CD8-positive, alpha-beta T cell (primary cell): ENCODE measurements at regions of chr19 and their contacts with region 1.

Region 1: DNA sequence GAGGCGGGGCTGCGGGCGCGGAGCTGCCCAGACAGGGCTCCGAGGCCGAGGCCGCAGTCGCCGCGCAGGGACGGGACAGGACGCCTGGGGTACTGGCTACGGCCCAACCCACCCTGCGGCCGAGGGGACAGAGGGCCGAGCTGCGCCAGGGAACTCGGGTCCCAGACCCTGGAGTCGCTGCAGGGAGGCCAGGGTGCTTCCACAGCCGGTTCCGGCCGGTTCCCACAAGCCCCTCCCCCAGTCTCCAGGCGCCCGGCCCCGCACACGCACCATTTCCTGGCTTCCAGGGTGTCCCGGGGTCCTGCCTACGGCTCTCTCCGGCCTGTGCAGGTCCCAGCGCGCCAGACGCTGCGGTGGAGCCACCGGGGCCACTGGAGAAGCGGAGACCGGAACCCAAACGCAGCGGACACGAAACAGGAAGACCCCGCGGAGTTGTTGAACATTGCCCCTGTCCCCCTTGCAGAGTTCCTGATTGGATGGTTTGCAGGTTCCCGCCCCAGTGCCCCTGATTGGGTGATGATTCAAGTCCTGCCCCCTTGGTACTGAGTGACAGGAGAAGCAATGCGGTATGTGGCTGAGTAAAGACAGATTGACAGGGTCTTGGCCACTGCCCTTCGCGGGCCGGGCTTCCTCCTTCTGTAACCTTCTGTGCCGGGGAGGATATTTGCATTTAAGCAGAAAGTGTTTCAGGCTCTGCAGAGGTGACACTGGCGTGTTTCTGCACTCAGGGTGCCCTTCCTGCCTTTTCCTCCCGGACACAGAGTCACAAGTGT is at the start of gene ZNF564:
- DNase-seq: peak; percentile 85 to 98 (median 92)
- ATAC-seq: peak; percentile 98
- H3K4me3 ChIP-seq: peak within 1 kb of the TSS; percentile 59 to 94
- H3K4me3 Mint-ChIP-seq: peak within 1 kb of the TSS; percentile 98
- H3K27ac ChIP-seq: peak within 1 kb of the TSS; percentile 88 to 91
- H3K27ac Mint-ChIP-seq: peak within 1 kb of the TSS; percentile 97
- H3K4me1 ChIP-seq: peaks cover 25% of the 10 kb centered on the region
- H3K4me1 Mint-ChIP-seq: peaks cover 51% of the 10 kb centered on the region
- H3K27me3 ChIP-seq: no peaks in the 10 kb centered on the region
- H3K27me3 Mint-ChIP-seq: no peaks in the 10 kb centered on the region
- CTCF ChIP-seq: no peak
- total RNA-seq, gene ZNF564: 17.8 to 18.2 TPM

Region 2: GRCh38 chr19:12162882-12163806 is 388.1 kb before region 1 on chr19 and contains the start of gene ZNF136:
- CTCF ChIA-PET with region 1: no interaction called
- POLR2A ChIA-PET with region 1: no interaction called
- intact Hi-C with region 1: loop called in 1 of 2 experiments (anchors 1 kb)
- DNase-seq: peak; percentile 84 to 97 (median 91)
- ATAC-seq: peak; percentile 99
- H3K4me3 ChIP-seq: peak within 1 kb of the TSS; percentile 83 to 86
- H3K4me3 Mint-ChIP-seq: peak within 1 kb of the TSS; percentile 96
- H3K27ac ChIP-seq: peak within 1 kb of the TSS; percentile 93 to 96
- H3K27ac Mint-ChIP-seq: peak within 1 kb of the TSS; percentile 98
- H3K4me1 ChIP-seq: peaks cover 25% of the 10 kb centered on the region
- H3K4me1 Mint-ChIP-seq: peaks cover 46% of the 10 kb centered on the region
- H3K27me3 ChIP-seq: no peaks in the 10 kb centered on the region
- H3K27me3 Mint-ChIP-seq: no peaks in the 10 kb centered on the region
- CTCF ChIP-seq: no peak
- total RNA-seq, gene ZNF136: 41.7 to 42.1 TPM

Region 3: DNA sequence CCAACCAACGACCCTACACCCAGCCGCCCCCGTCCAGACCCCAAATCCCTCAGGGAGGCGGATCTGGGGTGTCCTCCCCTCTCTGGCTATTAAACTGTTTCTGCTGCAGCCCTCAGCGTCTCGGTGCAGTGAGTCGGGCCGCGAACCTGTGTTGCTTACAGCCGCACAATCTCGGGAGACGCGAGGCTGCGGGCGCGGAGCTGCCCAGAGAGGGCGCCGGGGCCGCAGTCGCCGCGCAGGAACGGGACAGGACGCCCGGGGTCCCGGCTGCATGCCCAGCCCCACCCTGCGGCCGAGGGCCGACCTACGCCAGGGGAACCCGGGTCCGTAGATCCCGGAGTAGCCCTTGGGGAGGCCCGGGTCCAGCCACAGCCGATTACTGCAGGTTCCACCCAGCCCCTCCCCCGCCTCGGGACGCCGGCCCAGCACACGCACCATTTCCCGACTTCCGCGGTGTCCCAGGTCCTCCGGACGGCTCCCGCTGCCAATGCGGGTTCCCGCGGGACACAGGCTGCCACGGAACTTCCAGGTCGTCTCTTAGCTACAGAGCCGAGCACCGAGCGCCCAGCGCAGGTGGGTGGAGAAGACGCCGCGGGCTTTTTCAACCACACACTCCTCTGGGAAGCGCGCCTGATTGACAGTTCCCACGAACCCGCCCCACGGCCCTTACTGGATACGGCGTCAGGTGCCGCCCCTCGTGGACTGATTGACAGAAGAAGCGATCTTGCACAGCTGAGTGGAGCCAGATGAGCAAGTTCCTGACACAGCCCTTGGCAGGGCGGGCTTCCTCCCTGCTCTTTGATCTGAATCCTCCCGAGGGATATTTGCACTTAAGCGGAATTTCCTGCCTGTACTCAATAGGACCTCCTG is 150.4 kb before region 1 on chr19 and contains the start of gene ZNF799:
- CTCF ChIA-PET with region 1: no interaction called
- POLR2A ChIA-PET with region 1: no interaction called
- intact Hi-C with region 1: loop called in 1 of 2 experiments (anchors 1 kb)
- DNase-seq: peak; percentile 38 to 88 (median 81)
- ATAC-seq: peak; percentile 91
- H3K4me3 ChIP-seq: peak within 1 kb of the TSS; percentile 94 to 96
- H3K4me3 Mint-ChIP-seq: peak within 1 kb of the TSS; percentile 90
- H3K27ac ChIP-seq: peak within 1 kb of the TSS; percentile 37 to 58
- H3K27ac Mint-ChIP-seq: peak within 1 kb of the TSS; percentile 81
- H3K4me1 ChIP-seq: peaks cover 4% of the 10 kb centered on the region
- H3K4me1 Mint-ChIP-seq: peaks cover 27% of the 10 kb centered on the region
- H3K27me3 ChIP-seq: no peaks in the 10 kb centered on the region
- H3K27me3 Mint-ChIP-seq: no peaks in the 10 kb centered on the region
- CTCF ChIP-seq: no peak
- total RNA-seq, gene ZNF799: 1.1 TPM

Region 4: GRCh38 chr19:12495002-12495802 is 56.0 kb before region 1 on chr19:
- CTCF ChIA-PET with region 1: no interaction called
- POLR2A ChIA-PET with region 1: interaction called, 11 read pairs
- intact Hi-C with region 1: loop called (anchors 1 kb)
- DNase-seq: peak; percentile 81 to 96 (median 93)
- ATAC-seq: peak; percentile 99
- H3K4me3 ChIP-seq: peak overlapping the region; percentile 53 to 64
- H3K4me3 Mint-ChIP-seq: peak overlapping the region; percentile 91
- H3K27ac ChIP-seq: peak overlapping the region; percentile 68 to 79
- H3K27ac Mint-ChIP-seq: peak overlapping the region; percentile 94
- H3K4me1 ChIP-seq: peaks cover 8% of the 10 kb centered on the region
- H3K4me1 Mint-ChIP-seq: peaks cover 18% of the 10 kb centered on the region
- H3K27me3 ChIP-seq: no peaks in the 10 kb centered on the region
- H3K27me3 Mint-ChIP-seq: no peaks in the 10 kb centered on the region
- CTCF ChIP-seq: peak; percentile 55

Region 5: DNA sequence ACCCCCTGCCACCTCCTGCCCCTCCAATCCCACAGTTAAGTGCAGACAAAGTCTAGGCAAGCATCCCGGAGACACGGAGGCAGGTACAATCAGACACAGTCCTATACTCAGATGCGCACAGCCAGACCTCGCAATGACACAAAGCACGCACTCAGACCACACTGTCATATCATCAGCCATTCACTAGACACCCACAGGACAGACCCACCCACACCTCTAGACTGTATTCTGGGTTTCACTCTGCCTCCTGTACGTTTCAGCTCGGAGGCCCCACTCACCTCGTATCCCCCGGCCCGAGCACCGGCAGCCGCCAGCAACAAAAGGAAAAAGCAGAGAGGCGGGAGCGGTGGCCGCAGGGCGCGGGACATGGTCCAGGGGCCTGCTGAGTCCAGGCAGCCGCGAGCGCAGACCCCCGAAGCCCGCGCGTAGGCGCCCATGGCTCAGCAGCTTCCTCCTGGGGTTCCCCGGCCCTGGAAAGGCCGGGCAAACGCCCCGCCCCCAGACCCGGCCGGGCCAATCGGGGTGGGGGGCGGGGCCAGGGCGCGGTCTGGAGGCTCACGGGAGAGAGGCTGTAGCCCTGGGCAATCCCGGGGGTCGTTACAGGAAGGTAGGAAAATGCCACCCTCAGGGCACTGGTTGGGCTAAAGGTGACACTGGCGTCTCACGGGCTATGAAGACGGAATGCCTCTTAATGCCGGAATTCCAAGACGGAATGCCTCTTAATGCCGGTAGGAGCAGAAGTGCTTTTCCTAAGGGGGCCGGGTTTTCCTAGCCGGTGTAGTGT is 115.2 kb after region 1 on chr19 and contains the starts of genes MAN2B1 and WDR83:
- CTCF ChIA-PET with region 1: no interaction called
- POLR2A ChIA-PET with region 1: no interaction called
- intact Hi-C with region 1: loop called in 1 of 2 experiments (anchors 1 kb)
- DNase-seq: peak; percentile 57 to 92 (median 77)
- ATAC-seq: peak; percentile 72
- H3K4me3 ChIP-seq: peak within 1 kb of the TSS; percentile 82 to 84
- H3K4me3 Mint-ChIP-seq: peak within 1 kb of the TSS; percentile 90
- H3K27ac ChIP-seq: peak within 1 kb of the TSS; percentile 69 to 99
- H3K27ac Mint-ChIP-seq: peak within 1 kb of the TSS; percentile 94
- H3K4me1 ChIP-seq: peaks cover 46% of the 10 kb centered on the region
- H3K4me1 Mint-ChIP-seq: peaks cover 54% of the 10 kb centered on the region
- H3K27me3 ChIP-seq: no peaks in the 10 kb centered on the region
- H3K27me3 Mint-ChIP-seq: no peaks in the 10 kb centered on the region
- CTCF ChIP-seq: no peak
- total RNA-seq, gene MAN2B1: 74.8 to 82.2 TPM
- total RNA-seq, gene WDR83: 7.4 to 10.0 TPM

Region 6: DNA sequence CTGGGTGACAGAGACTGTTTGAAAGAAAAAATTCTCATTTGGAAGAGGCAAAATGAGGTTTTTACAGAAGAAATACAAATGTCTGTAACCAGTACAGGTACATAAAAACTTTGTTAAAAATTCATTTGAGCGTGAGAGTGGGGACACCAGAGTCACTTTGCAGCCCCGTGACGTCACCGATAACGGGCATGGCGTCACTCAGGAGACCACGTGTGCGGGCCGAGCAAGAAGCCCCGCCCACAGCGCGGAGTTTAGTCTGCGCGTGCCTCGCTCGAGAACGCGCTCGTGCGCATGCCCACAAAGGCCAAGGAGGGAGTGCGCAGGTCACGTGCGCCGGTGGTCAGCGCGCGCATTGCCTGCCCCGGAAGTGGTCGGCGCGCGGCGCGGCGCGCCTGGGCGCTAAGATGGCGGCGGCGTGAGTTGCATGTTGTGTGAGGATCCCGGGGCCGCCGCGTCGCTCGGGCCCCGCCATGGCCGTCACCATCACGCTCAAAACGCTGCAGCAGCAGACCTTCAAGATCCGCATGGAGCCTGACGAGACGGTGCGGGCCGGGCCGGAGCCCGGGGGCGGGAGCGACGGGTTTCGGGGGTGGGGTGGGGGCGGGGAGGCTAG is 394.3 kb after region 1 on chr19 and contains the start of gene RAD23A:
- CTCF ChIA-PET with region 1: no interaction called
- POLR2A ChIA-PET with region 1: no interaction called
- intact Hi-C with region 1: loop called in 1 of 2 experiments (anchors 2 kb)
- DNase-seq: peak; percentile 97 to 100 (median 98)
- ATAC-seq: peak; percentile 86
- H3K4me3 ChIP-seq: peak within 1 kb of the TSS; percentile 60 to 64
- H3K4me3 Mint-ChIP-seq: peak within 1 kb of the TSS; percentile 91
- H3K27ac ChIP-seq: peak within 1 kb of the TSS; percentile 67 to 83
- H3K27ac Mint-ChIP-seq: peak within 1 kb of the TSS; percentile 96
- H3K4me1 ChIP-seq: peaks cover 35% of the 10 kb centered on the region
- H3K4me1 Mint-ChIP-seq: peaks cover 43% of the 10 kb centered on the region
- H3K27me3 ChIP-seq: no peaks in the 10 kb centered on the region
- H3K27me3 Mint-ChIP-seq: no peaks in the 10 kb centered on the region
- CTCF ChIP-seq: no peak
- total RNA-seq, gene RAD23A: 86.3 to 90.8 TPM